CD4-positive, alpha-beta T cell (primary cell): ENCODE measurements at regions of chr1 and their contacts with region 1.

Region 1: DNA sequence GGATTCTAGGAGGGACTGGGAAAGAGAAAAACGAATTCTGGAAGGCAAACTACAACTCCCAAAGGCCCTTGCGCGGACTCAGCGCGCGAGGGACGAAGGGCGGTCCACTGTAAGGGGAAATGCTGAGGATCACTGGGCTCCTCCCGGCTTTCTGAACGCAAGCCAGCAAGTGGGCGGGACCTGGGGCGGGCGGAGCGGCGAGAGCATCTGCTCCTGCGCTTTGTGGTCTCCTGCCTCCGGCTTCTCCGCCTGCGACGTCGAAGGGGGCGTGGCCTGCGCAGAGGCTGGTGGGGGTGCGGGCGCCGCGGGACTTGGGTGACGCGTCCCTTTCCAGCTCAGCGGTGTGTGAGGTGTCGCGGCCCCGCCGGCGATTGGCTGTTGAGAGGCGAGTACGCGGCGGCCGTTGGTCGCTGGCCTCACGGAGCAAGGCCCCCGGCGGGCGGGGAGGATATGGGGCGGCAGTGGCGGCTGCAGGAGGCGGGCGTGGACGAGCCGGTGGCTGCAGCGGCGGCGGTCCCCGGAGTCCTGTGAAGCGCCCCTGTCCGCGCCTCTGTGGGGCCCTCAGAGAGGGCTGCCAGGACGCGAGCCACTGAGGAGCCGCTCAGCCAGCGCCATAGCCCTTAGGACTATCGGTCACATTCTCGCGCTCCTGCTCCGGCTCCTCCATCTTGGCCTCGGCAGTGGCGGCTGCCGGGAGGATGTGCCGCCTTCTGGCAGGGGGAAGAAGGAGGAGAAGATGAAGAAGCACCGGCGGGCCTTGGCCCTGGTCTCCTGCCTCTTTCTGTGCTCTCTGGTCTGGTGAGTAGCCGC is at the start of gene SUCO:
- DNase-seq: peak; percentile 99 to 100 (median 100)
- ATAC-seq: peak; percentile 82
- H3K4me3 ChIP-seq: peak within 1 kb of the TSS; percentile 89
- H3K4me3 Mint-ChIP-seq: peak within 1 kb of the TSS; percentile 99
- H3K27ac ChIP-seq: peak within 1 kb of the TSS; percentile 97 to 99
- H3K27ac Mint-ChIP-seq: peak within 1 kb of the TSS; percentile 99
- H3K4me1 ChIP-seq: peaks cover 7% of the 10 kb centered on the region
- H3K4me1 Mint-ChIP-seq: peaks cover 51% of the 10 kb centered on the region
- H3K27me3 ChIP-seq: peaks cover 0 to 7% of the 10 kb centered on the region in 2 experiments
- H3K27me3 Mint-ChIP-seq: peaks cover 7% of the 10 kb centered on the region
- CTCF ChIP-seq: peak; percentile 37
- total RNA-seq, gene SUCO: 93.1 to 104 TPM

Region 2: GRCh38 chr1:171485375-171486047 is 1047.4 kb before region 1 on chr1 and contains the start of gene PRRC2C:
- CTCF ChIA-PET with region 1: no interaction called
- POLR2A ChIA-PET with region 1: interaction called, 23 read pairs
- intact Hi-C with region 1: loop called in 1 of 2 experiments (anchors 5 kb)
- DNase-seq: peak; percentile 87 to 99 (median 93)
- ATAC-seq: peak; percentile 81
- H3K4me3 ChIP-seq: peak within 1 kb of the TSS; percentile 85
- H3K4me3 Mint-ChIP-seq: peak within 1 kb of the TSS; percentile 95
- H3K27ac ChIP-seq: peak within 1 kb of the TSS; percentile 100
- H3K27ac Mint-ChIP-seq: peak within 1 kb of the TSS; percentile 95
- H3K4me1 ChIP-seq: peaks cover 30% of the 10 kb centered on the region
- H3K4me1 Mint-ChIP-seq: peaks cover 50% of the 10 kb centered on the region
- H3K27me3 ChIP-seq: no peaks in the 10 kb centered on the region
- H3K27me3 Mint-ChIP-seq: no peaks in the 10 kb centered on the region
- CTCF ChIP-seq: peak; percentile 47
- total RNA-seq, gene PRRC2C: 357 to 387 TPM

Region 3: DNA sequence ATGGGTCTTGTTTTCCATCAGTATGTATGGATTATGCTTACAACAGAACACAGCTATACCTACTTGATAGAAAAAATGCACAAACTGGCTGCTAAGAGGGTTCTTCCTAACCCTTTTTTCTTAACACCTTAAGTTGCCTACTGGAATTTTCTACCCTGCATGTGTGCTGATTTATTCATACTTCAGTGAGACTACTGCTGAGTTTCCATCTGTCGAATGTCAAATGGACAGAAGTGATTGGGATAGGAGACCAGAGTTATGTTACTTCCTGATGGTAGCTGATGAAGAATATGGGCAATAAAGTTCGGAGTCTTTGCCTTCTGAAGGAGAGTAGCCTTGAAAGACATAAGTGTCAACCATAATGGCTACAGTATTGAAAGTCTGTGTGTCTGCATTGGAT is 698.1 kb before region 1 on chr1:
- CTCF ChIA-PET with region 1: no interaction called
- POLR2A ChIA-PET with region 1: no interaction called
- intact Hi-C with region 1: loop called in 1 of 2 experiments (anchors 5 kb)
- DNase-seq: no peak
- ATAC-seq: no peak
- H3K4me3 ChIP-seq: no peak overlapping the region
- H3K4me3 Mint-ChIP-seq: no peak overlapping the region
- H3K27ac ChIP-seq: no peak overlapping the region
- H3K27ac Mint-ChIP-seq: no peak overlapping the region
- H3K4me1 ChIP-seq: no peaks in the 10 kb centered on the region
- H3K4me1 Mint-ChIP-seq: no peaks in the 10 kb centered on the region
- H3K27me3 ChIP-seq: no peaks in the 10 kb centered on the region
- H3K27me3 Mint-ChIP-seq: no peaks in the 10 kb centered on the region
- CTCF ChIP-seq: no peak

Region 4: GRCh38 chr1:172443626-172444453 is 89.1 kb before region 1 on chr1 and contains the start of gene PIGC:
- CTCF ChIA-PET with region 1: interaction called, 4 read pairs
- POLR2A ChIA-PET with region 1: interaction called, 9 read pairs
- intact Hi-C with region 1: loop called (anchors 5 kb)
- DNase-seq: peak; percentile 86 to 95 (median 92)
- ATAC-seq: peak; percentile 99
- H3K4me3 ChIP-seq: peak within 1 kb of the TSS; percentile 92
- H3K4me3 Mint-ChIP-seq: peak within 1 kb of the TSS; percentile 98
- H3K27ac ChIP-seq: peak within 1 kb of the TSS; percentile 69 to 79
- H3K27ac Mint-ChIP-seq: peak within 1 kb of the TSS; percentile 90
- H3K4me1 ChIP-seq: peaks cover 17% of the 10 kb centered on the region
- H3K4me1 Mint-ChIP-seq: peaks cover 39% of the 10 kb centered on the region
- H3K27me3 ChIP-seq: no peaks in the 10 kb centered on the region
- H3K27me3 Mint-ChIP-seq: no peaks in the 10 kb centered on the region
- CTCF ChIP-seq: peak; percentile 86
- total RNA-seq, gene PIGC: 23.7 to 27.1 TPM

Region 5: GRCh38 chr1:173476664-173477285 is 943.9 kb after region 1 on chr1:
- CTCF ChIA-PET with region 1: no interaction called
- POLR2A ChIA-PET with region 1: interaction called, 15 read pairs
- intact Hi-C with region 1: loop called in 1 of 2 experiments (anchors 5 kb)
- DNase-seq: peak; percentile 53 to 91 (median 75)
- ATAC-seq: peak; percentile 79
- H3K4me3 ChIP-seq: peak overlapping the region; percentile 84
- H3K4me3 Mint-ChIP-seq: peak overlapping the region; percentile 93
- H3K27ac ChIP-seq: peak overlapping the region; percentile 48 to 89
- H3K27ac Mint-ChIP-seq: peak overlapping the region; percentile 82
- H3K4me1 ChIP-seq: peaks cover 32% of the 10 kb centered on the region
- H3K4me1 Mint-ChIP-seq: peaks cover 72% of the 10 kb centered on the region
- H3K27me3 ChIP-seq: no peaks in the 10 kb centered on the region
- H3K27me3 Mint-ChIP-seq: no peaks in the 10 kb centered on the region
- CTCF ChIP-seq: no peak

Region 6: DNA sequence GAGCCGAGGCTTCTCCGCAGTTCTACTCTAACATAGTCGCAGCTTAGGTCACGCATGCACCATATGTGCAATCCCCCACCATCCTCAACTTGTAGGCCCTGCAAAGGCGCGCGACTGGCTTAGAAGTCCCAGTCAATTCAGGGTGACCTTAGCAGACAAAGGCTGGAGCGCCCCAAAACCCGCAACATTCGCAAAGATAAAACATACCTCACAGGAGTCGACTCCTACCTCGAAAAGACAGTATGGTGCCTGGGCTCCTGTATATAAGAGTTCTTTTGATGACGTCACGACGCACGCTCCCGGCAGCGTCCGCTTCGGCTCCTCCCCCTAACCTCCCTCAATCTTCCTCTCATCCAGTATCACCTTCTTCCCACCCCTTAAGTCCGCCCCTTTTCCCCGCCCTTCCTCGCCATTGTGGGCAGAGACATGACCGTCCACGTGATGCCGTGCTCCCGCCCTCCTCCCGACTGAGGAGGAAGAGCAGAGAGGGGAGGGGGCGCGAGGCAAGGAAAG is 1334.9 kb after region 1 on chr1 and contains the start of gene GAS5:
- CTCF ChIA-PET with region 1: no interaction called
- POLR2A ChIA-PET with region 1: interaction called, 17 read pairs
- intact Hi-C with region 1: loop called (anchors 1 to 2 kb)
- DNase-seq: peak; percentile 98 to 100 (median 99)
- ATAC-seq: peak; percentile 79
- H3K4me3 ChIP-seq: peak within 1 kb of the TSS; percentile 90
- H3K4me3 Mint-ChIP-seq: peak within 1 kb of the TSS; percentile 93
- H3K27ac ChIP-seq: peak within 1 kb of the TSS; percentile 96
- H3K27ac Mint-ChIP-seq: peak within 1 kb of the TSS; percentile 95
- H3K4me1 ChIP-seq: peaks cover 59% of the 10 kb centered on the region
- H3K4me1 Mint-ChIP-seq: peaks cover 85% of the 10 kb centered on the region
- H3K27me3 ChIP-seq: no peaks in the 10 kb centered on the region
- H3K27me3 Mint-ChIP-seq: no peaks in the 10 kb centered on the region
- CTCF ChIP-seq: no peak
- total RNA-seq, gene GAS5: 865 to 867 TPM